Naive thymus-derived CD4-positive, alpha-beta T cell (primary cell): ENCODE measurements at regions of chr4 and their contacts with region 1.

Region 1: GRCh38 chr4:101730291-101731117 is 60.0 kb upstream of the BANK1 start:
- DNase-seq: peak in 8 of 9 donors; percentile 8 to 36 (median 27)
- ATAC-seq: peak; percentile 80
- H3K4me3 ChIP-seq: no peak overlapping the region
- H3K4me3 Mint-ChIP-seq: no peak overlapping the region
- H3K27ac ChIP-seq: no peak overlapping the region
- H3K27ac Mint-ChIP-seq: no peak overlapping the region
- H3K4me1 ChIP-seq: no peaks in the 10 kb centered on the region
- H3K4me1 Mint-ChIP-seq: peaks cover 0 to 5% (median 0%) of the 10 kb centered on the region in 7 donors
- H3K27me3 ChIP-seq: no peaks in the 10 kb centered on the region
- H3K27me3 Mint-ChIP-seq: peaks cover 6 to 12% (median 9%) of the 10 kb centered on the region in 5 donors

Region 2: DNA sequence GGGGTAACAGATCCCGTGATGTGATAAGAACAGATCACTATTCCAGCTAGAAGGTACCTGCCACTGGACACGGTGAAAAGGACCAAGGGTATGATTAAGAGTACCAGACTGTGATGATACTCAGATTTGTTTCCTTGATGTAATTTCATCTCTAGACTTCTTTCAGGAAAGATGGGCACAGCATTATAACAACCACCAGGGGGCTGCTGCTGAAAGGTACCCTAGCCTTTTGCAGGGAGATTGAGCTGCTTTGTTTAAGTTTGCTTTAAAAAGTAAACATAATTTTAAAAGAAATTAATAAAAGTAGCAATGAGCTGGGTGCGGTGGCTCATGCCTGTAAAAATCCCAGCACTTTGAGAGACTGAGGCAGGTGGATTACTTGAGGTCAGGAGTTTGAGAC is 1358.1 kb before region 1 on chr4:
- CTCF ChIA-PET with region 1: no interaction called
- POLR2A ChIA-PET with region 1: no interaction called
- intact Hi-C with region 1: loop called in 1 of 2 experiments (anchors 2 kb)
- DNase-seq: peak in 1 of 9 donors; percentile 1
- ATAC-seq: no peak
- H3K4me3 ChIP-seq: no peak overlapping the region
- H3K4me3 Mint-ChIP-seq: no peak overlapping the region
- H3K27ac ChIP-seq: no peak overlapping the region
- H3K27ac Mint-ChIP-seq: no peak overlapping the region
- H3K4me1 ChIP-seq: no peaks in the 10 kb centered on the region
- H3K4me1 Mint-ChIP-seq: no peaks in the 10 kb centered on the region
- H3K27me3 ChIP-seq: no peaks in the 10 kb centered on the region
- H3K27me3 Mint-ChIP-seq: peaks cover 0 to 5% (median 0%) of the 10 kb centered on the region in 5 donors

Region 3: GRCh38 chr4:100848869-100849268 is 881.6 kb before region 1 on chr4:
- CTCF ChIA-PET with region 1: interaction called, 4 read pairs
- POLR2A ChIA-PET with region 1: no interaction called
- intact Hi-C with region 1: loop called in 1 of 2 experiments (anchors 1 kb)
- DNase-seq: peak in 1 of 9 donors; percentile 1
- ATAC-seq: no peak
- H3K4me3 ChIP-seq: no peak overlapping the region
- H3K4me3 Mint-ChIP-seq: no peak overlapping the region
- H3K27ac ChIP-seq: no peak overlapping the region
- H3K27ac Mint-ChIP-seq: no peak overlapping the region
- H3K4me1 ChIP-seq: no peaks in the 10 kb centered on the region
- H3K4me1 Mint-ChIP-seq: no peaks in the 10 kb centered on the region
- H3K27me3 ChIP-seq: no peaks in the 10 kb centered on the region
- H3K27me3 Mint-ChIP-seq: no peaks in the 10 kb centered on the region

Region 4: GRCh38 chr4:100935090-100935489 is 795.4 kb before region 1 on chr4:
- CTCF ChIA-PET with region 1: no interaction called
- POLR2A ChIA-PET with region 1: no interaction called
- intact Hi-C with region 1: loop called in 1 of 2 experiments (anchors 2 kb)
- DNase-seq: no peak
- ATAC-seq: no peak
- H3K4me3 ChIP-seq: no peak overlapping the region
- H3K4me3 Mint-ChIP-seq: no peak overlapping the region
- H3K27ac ChIP-seq: no peak overlapping the region
- H3K27ac Mint-ChIP-seq: no peak overlapping the region
- H3K4me1 ChIP-seq: no peaks in the 10 kb centered on the region
- H3K4me1 Mint-ChIP-seq: peaks cover 0 to 6% (median 0%) of the 10 kb centered on the region in 7 donors
- H3K27me3 ChIP-seq: no peaks in the 10 kb centered on the region
- H3K27me3 Mint-ChIP-seq: peaks cover 0 to 29% (median 15%) of the 10 kb centered on the region in 5 donors

Region 5: DNA sequence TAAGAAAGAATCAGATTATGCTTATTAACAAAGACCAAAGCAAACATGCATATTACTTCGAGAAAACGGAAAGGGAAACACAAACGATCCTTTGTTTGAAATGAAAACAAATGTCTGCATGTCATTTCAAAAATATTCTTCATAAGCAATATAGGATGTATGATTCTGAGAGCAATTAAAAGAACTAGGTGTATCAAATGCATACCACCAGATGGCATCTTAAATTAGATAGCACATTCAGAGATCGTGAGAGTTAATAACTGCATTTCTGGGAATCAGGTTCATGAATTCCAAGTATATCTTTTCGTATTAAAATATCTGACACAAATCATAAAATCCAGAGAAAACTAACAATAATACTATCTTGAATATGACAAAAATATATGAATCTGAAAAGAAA is 542.7 kb before region 1 on chr4:
- CTCF ChIA-PET with region 1: no interaction called
- POLR2A ChIA-PET with region 1: no interaction called
- intact Hi-C with region 1: loop called (anchors 1 to 5 kb)
- DNase-seq: peak in 4 of 9 donors; percentile 7 to 27 (median 15)
- ATAC-seq: peak; percentile 42
- H3K4me3 ChIP-seq: no peak overlapping the region
- H3K4me3 Mint-ChIP-seq: peak overlapping the region in 1 of 10 donors; percentile 25
- H3K27ac ChIP-seq: no peak overlapping the region
- H3K27ac Mint-ChIP-seq: no peak overlapping the region
- H3K4me1 ChIP-seq: no peaks in the 10 kb centered on the region
- H3K4me1 Mint-ChIP-seq: peaks cover 7 to 41% (median 17%) of the 10 kb centered on the region in 7 donors
- H3K27me3 ChIP-seq: no peaks in the 10 kb centered on the region
- H3K27me3 Mint-ChIP-seq: no peaks in the 10 kb centered on the region